HEK293 (cell line): ENCODE measurements at regions of chr1 and their contacts with region 1.

Region 1: GRCh38 chr1:115595279-115596079 is 46.3 kb upstream of the VANGL1 start:
- H3K4me3 ChIP-seq: no peak overlapping the region
- H3K27ac ChIP-seq: no peak overlapping the region
- H3K4me1 ChIP-seq: no peaks in the 10 kb centered on the region
- CTCF ChIP-seq: peak; percentile 84

Region 2: GRCh38 chr1:115138968-115139367 is 456.5 kb before region 1 on chr1:
- CTCF ChIA-PET with region 1: interaction called, 104 read pairs
- POLR2A ChIA-PET with region 1: no interaction called
- H3K4me3 ChIP-seq: no peak overlapping the region
- H3K27ac ChIP-seq: no peak overlapping the region
- H3K4me1 ChIP-seq: no peaks in the 10 kb centered on the region
- CTCF ChIP-seq: peak; percentile 91

Region 3: GRCh38 chr1:115463363-115463746 is 132.1 kb before region 1 on chr1:
- CTCF ChIA-PET with region 1: interaction called, 16 read pairs
- POLR2A ChIA-PET with region 1: no interaction called
- H3K4me3 ChIP-seq: no peak overlapping the region
- H3K27ac ChIP-seq: no peak overlapping the region
- H3K4me1 ChIP-seq: peaks cover 7% of the 10 kb centered on the region
- CTCF ChIP-seq: peak; percentile 64

Region 4: DNA sequence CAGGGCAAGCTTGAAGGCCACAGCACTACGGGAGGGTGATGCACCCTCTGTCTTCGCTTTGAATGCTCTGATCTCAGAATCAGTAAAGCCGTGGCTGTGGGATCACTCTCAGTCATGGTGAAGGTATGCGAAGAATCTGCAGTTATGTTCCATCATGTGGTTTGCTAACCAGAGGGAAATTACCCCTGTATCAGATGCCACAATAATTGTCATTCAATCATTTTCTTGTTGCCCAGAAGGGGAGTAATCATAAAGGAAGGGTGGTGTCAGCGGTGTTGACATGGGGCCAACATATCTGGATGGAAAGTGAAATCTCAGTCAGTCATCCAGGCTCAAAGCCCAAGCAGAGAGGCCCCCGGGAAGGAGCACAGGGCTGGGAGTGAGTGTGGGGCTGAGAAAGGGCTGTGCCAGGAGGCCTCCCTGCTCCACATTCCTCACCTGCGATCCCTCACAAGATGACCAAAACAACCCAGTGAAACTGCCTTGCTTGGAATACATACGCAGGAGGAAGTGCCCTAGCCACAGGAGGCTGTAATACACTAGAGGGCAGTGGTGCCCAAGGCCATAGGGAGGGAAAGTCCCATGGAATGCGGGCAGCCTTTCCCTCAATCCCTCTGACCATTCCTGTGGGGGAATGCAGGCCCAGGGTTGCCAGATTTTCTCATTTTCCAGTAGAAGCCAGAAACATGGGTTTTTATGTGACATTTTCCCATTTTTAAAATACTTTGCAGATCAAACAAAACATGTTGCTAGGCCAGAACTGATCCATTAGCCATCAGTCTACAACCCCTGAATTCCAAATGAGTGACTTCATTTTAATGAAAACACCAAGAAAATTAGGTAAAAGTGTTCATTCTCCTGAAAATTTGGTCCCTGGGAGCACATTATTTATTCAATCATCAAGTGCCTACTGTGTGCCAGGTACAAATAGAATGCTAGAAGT is 49.4 kb before region 1 on chr1:
- CTCF ChIA-PET with region 1: interaction called, 16 read pairs
- POLR2A ChIA-PET with region 1: no interaction called
- H3K4me3 ChIP-seq: no peak overlapping the region
- H3K27ac ChIP-seq: no peak overlapping the region
- H3K4me1 ChIP-seq: no peaks in the 10 kb centered on the region
- CTCF ChIP-seq: peak; percentile 47; the same call in 1 of the 2 replicates

Region 5: GRCh38 chr1:115771847-115772457 is 176.5 kb after region 1 on chr1:
- CTCF ChIA-PET with region 1: interaction called, 12 read pairs
- POLR2A ChIA-PET with region 1: no interaction called
- H3K4me3 ChIP-seq: no peak overlapping the region
- H3K27ac ChIP-seq: no peak overlapping the region
- H3K4me1 ChIP-seq: no peaks in the 10 kb centered on the region
- CTCF ChIP-seq: peak; percentile 79